Activated CD8-positive, alpha-beta T cell treated with anti-CD3 and anti-CD28 coated beads, Interleukin-2, amount 10 ng/mL, durations not matched to agents 7 days and 5 days (primary cell): ENCODE measurements at regions of chr2 and their contacts with region 1.

Region 1: DNA sequence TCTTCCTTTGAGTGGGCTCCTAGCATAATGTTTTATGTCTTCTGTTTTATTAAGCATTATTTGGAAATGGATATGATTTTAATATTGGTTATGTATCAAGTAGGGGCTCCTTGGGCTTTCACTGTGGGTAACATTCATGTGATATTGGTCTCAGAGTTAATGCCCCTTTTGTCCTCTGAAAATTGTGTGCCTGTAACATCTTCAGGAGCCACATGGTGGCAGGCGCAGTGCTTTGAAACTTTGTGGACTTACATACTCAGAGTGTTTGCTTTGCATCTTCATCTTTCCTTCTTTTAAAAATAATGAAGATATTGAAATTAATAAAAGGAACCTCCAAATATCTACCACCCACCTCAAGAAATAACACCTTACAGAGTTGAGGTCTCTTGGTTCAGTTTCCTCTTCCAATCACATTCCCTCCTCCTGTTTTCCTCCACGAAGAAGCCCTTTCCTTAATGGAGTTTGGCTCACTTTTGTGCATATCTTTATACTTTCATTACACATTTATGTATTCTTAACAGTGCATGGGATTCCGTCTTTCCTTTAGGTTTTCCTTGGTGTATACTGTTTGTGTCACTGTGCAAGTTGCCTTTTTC is 73.5 kb downstream of the LIMS1 start:
- DNase-seq: peak; percentile 56
- ATAC-seq: no peak
- H3K4me3 Mint-ChIP-seq: no peak overlapping the region
- H3K27ac Mint-ChIP-seq: no peak overlapping the region
- H3K4me1 Mint-ChIP-seq: peaks cover 55% of the 10 kb centered on the region
- H3K27me3 Mint-ChIP-seq: no peaks in the 10 kb centered on the region

Region 2: DNA sequence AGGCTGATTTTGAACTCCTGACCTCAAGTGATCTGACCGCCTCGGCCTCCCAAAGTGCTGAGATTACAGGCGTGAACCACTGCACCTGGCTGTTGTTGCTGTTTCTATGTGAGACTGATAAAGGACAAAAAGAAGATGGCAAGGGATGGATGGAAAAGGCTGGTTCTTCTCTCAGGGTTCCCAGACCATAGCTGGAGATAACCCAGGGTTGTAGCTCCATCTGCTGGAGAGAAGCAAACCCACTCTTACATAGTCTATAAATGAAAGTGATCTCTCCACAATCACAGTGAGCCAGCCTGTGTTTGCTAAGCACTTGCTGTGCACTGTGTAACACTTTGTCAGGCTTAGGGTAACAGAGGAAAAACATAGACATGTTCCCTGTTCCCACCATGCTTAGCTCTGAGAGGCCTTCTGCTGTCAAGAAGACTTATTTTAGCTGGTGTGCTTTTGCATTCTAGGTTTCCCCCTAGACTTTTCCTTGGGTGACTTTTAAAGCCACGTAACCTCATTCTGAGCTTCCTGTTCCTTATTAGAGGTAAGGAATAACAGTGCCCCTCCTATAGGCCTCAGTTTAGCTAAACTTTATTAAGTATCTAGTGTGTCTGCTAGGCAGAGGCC is 23.8 kb before region 1 on chr2:
- CTCF ChIA-PET with region 1: interaction called, 12 read pairs
- POLR2A ChIA-PET with region 1: no interaction called
- DNase-seq: peak; percentile 74
- ATAC-seq: peak; percentile 93
- H3K4me3 Mint-ChIP-seq: no peak overlapping the region
- H3K27ac Mint-ChIP-seq: no peak overlapping the region
- H3K4me1 Mint-ChIP-seq: peaks cover 20% of the 10 kb centered on the region
- H3K27me3 Mint-ChIP-seq: no peaks in the 10 kb centered on the region

Region 3: DNA sequence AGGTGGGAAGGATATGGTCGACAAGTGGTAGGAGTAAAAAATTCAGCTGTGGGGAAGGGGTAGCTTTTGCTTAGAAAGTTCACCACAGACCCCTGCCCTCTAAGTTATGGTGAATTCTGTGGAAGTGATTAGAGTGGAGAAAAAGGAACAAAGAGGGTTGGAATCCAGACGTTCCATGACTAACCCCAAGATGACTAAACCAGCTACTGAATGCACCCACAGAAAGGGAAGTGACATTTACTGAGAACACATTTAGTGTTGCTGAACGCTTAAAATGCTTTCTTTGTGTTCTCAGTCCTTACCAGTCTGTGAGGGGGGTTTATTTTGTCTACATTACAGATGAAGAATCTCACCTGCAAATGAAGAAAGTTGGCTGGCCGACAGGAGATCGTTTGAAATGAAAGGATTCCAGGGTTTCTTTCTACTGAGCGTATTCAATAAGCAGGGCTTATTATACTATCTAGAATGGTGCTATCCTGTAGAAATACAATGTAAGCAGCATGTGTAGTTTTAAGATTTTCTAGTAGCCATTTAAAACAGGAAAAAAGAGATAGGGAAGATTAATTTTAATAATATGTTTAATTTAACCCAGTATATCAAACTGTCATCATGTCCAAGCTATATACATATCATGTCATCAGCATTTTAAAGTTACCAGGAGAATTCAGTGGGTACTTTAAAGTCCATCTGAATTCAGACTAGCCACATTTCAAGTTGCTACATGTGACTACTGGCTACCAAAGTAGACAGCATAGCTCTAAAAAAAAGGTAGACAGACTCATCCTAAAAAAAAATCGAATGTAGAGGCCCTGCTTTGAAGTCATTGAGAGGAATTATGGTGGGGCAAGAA is 13.4 kb before region 1 on chr2:
- CTCF ChIA-PET with region 1: interaction called, 11 read pairs
- POLR2A ChIA-PET with region 1: interaction called, 3 read pairs
- DNase-seq: no peak
- ATAC-seq: peak; percentile 52
- H3K4me3 Mint-ChIP-seq: peak overlapping the region; percentile 27
- H3K27ac Mint-ChIP-seq: peak overlapping the region; percentile 54
- H3K4me1 Mint-ChIP-seq: peaks cover 49% of the 10 kb centered on the region
- H3K27me3 Mint-ChIP-seq: no peaks in the 10 kb centered on the region

Region 4: GRCh38 chr2:108621087-108621559 is 13.3 kb after region 1 on chr2:
- CTCF ChIA-PET with region 1: interaction called, 9 read pairs
- POLR2A ChIA-PET with region 1: interaction called, 14 read pairs
- DNase-seq: peak; percentile 85
- ATAC-seq: peak; percentile 99
- H3K4me3 Mint-ChIP-seq: peak overlapping the region; percentile 73
- H3K27ac Mint-ChIP-seq: peak overlapping the region; percentile 91
- H3K4me1 Mint-ChIP-seq: peaks cover 66% of the 10 kb centered on the region
- H3K27me3 Mint-ChIP-seq: no peaks in the 10 kb centered on the region

Region 5: DNA sequence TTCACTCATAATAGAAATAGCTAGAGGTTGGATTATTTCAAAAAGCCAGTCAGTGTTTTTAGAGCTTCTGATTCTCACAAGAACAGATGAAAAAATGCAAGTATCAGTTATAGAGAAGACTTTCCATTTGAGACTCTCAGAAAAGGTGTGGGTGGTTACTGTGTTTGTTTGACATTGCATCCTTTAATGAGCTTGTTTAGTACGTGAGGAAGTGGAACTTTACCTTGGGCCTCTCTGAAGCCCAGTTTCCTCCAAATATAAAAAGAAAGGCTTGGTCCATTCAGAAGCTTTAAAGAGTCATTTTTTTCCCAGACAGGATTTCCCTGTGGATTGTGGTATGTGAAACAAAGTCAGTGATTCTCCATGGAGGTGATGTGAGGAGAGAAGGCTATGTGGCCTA is 21.6 kb after region 1 on chr2:
- CTCF ChIA-PET with region 1: interaction called, 227 read pairs
- POLR2A ChIA-PET with region 1: interaction called, 5 read pairs
- DNase-seq: no peak
- ATAC-seq: peak; percentile 56
- H3K4me3 Mint-ChIP-seq: no peak overlapping the region
- H3K27ac Mint-ChIP-seq: peak overlapping the region; percentile 50
- H3K4me1 Mint-ChIP-seq: peaks cover 51% of the 10 kb centered on the region
- H3K27me3 Mint-ChIP-seq: no peaks in the 10 kb centered on the region

Region 6: DNA sequence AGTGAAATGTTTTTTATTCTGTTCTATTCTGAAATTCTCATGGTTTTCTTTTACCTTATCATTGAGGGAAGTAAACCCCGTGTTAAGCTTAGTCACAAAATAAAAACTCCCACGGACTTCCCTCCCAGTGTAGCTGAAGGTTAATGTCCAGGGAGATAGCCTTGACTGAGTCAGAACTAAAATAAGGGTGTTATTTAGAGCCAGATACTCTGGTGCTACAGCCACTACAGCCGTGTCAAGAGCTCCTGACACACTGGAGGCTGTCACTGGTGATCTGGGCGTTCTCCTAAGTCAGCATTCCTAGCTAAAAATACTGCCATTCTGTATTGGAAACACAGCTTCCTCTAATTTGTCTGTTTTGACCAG is 29.5 kb after region 1 on chr2:
- CTCF ChIA-PET with region 1: interaction called, 227 read pairs
- POLR2A ChIA-PET with region 1: interaction called, 3 read pairs
- DNase-seq: no peak
- ATAC-seq: no peak
- H3K4me3 Mint-ChIP-seq: no peak overlapping the region
- H3K27ac Mint-ChIP-seq: no peak overlapping the region
- H3K4me1 Mint-ChIP-seq: peaks cover 23% of the 10 kb centered on the region
- H3K27me3 Mint-ChIP-seq: no peaks in the 10 kb centered on the region

Region 7: DNA sequence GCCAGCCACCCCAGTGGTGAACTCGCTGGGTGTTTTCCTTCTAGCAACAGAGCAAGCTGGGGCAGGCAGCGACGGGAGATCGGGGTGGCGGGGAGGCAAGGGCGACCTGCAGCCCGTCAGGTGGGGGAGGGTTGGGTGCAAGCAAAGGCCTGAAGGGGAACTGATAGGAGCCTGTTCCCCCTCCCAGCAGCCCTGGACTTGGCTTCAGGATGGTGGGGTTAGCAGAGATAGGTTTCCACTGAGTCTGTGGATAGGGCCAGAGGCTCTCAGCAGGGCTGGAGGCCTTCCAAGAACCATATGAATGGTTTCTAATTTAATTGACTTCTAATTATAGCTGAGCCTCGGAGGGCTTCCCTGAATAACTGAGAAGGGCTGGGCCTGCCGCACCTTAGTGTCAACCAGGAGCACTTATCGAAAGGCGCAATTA is 325.9 kb after region 1 on chr2:
- CTCF ChIA-PET with region 1: no interaction called
- POLR2A ChIA-PET with region 1: no interaction called
- DNase-seq: no peak
- ATAC-seq: no peak
- H3K4me3 Mint-ChIP-seq: no peak overlapping the region
- H3K27ac Mint-ChIP-seq: no peak overlapping the region
- H3K4me1 Mint-ChIP-seq: peaks cover 11% of the 10 kb centered on the region
- H3K27me3 Mint-ChIP-seq: no peaks in the 10 kb centered on the region